Activated CD4-positive, alpha-beta T cell treated with anti-CD3 and anti-CD28 coated beads, Interleukin-2, amount 10 ng/mL, durations not matched to agents 24 days and 14 days (primary cell): ENCODE measurements at regions of chr1 and their contacts with region 1.

Region 1: DNA sequence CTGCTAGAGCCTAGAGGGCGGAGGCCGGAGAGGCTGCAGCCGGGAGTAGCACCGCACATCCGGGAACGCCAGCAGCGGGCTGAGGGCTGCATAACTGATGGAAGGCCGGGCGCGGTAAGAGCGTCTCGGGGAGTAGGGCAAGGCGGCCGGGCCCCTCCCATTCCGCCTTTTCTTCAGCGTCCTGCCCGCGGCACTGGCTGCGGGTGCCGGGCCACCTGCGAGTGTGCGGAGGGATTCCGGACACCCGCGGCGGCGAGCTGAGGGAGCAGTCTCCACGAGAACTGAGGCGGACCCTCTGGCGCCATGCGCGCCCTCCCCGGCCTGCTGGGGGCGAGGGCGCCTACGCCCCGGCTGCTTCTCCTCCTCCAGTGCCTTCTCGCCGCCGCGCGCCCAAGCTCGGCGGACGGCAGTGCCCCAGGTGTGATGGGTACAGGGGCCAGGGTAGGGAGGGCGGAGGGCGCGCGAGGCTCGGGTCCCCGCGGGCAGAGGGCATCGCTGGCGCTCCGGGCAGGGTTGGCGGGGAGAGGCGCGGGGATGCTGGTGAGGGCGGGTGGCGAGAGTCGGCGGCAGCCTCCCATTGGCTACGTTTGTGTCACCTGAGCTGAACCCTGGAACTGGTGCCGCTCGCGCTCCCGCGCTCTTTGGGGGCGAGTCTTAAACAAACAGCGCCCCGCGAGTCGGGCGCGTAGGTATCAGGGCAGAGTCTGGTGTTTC is 334.4 kb downstream of the SRGAP2C start:
- DNase-seq: peak; percentile 95
- H3K4me3 Mint-ChIP-seq: peak overlapping the region; percentile 98
- H3K27ac Mint-ChIP-seq: peak overlapping the region; percentile 95
- H3K4me1 Mint-ChIP-seq: peaks cover 60% of the 10 kb centered on the region
- H3K27me3 Mint-ChIP-seq: no peaks in the 10 kb centered on the region

Region 2: GRCh38 chr1:121458291-121459048 is 60.7 kb before region 1 on chr1:
- intact Hi-C with region 1: loop called (anchors 2 kb)
- DNase-seq: no peak
- H3K4me3 Mint-ChIP-seq: peak overlapping the region; percentile 64
- H3K27ac Mint-ChIP-seq: peak overlapping the region; percentile 59
- H3K4me1 Mint-ChIP-seq: peaks cover 15% of the 10 kb centered on the region
- H3K27me3 Mint-ChIP-seq: peaks cover 7% of the 10 kb centered on the region

Region 3: GRCh38 chr1:121483961-121484424 is 35.2 kb before region 1 on chr1:
- intact Hi-C with region 1: no loop called
- DNase-seq: no peak
- H3K4me3 Mint-ChIP-seq: no peak overlapping the region
- H3K27ac Mint-ChIP-seq: peak overlapping the region; percentile 56
- H3K4me1 Mint-ChIP-seq: peaks cover 26% of the 10 kb centered on the region
- H3K27me3 Mint-ChIP-seq: no peaks in the 10 kb centered on the region

Region 4: DNA sequence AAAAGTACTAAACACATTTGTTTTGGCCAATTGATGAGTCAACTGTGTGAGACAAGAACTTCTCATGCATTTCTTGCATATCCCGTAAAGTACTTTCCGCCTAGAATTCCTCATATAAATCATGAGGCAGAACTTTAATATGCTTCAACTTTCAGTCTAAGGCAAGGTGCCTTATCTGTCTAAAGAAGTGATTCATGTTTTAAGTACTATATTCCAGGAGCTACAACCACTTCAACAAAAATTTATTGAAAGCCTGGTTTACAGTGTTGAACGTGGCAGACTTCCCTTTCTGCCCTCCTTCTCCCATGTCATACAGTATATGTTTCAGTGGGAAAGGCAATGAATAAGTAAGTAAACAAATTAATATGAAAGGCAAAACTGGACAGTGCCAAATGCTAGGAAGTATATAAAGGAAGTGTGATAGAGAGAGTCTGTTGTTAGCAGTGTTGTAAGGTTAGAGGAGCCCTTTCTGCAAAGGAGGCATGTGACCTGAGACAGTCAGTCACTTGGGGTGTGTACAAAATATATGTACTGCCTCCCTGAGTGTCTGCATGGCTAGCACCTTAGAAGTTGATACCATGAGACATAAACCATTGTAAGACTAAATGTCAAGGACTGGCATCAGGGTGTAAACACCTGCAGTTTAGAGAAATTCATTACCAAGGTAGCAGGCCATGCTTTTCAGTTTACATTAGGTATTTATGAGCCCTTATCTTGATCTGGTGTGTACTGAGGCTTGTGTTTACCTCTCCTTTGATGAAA is 27.8 kb after region 1 on chr1:
- intact Hi-C with region 1: no loop called
- DNase-seq: no peak
- H3K4me3 Mint-ChIP-seq: no peak overlapping the region
- H3K27ac Mint-ChIP-seq: no peak overlapping the region
- H3K4me1 Mint-ChIP-seq: peaks cover 22% of the 10 kb centered on the region
- H3K27me3 Mint-ChIP-seq: no peaks in the 10 kb centered on the region

Region 5: DNA sequence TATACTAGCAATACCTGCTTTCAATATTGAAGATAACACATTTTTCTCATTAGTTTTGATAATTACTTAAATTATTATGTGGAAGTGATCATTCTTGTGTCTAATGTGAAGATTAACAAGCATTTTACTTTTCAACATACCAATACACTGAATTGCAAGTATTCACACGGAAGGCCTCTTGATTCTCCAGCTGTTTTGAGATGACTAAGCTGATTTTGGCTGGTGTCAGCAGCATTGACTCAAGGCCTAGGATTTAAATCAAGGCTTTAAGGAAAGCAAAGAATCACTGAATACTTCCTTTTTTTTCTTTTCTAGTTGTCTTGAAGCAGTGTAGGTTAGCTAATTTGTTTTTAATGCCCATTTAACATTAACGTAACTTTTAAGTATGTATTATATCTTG is 39.3 kb after region 1 on chr1:
- intact Hi-C with region 1: no loop called
- DNase-seq: no peak
- H3K4me3 Mint-ChIP-seq: no peak overlapping the region
- H3K27ac Mint-ChIP-seq: no peak overlapping the region
- H3K4me1 Mint-ChIP-seq: peaks cover 4% of the 10 kb centered on the region
- H3K27me3 Mint-ChIP-seq: no peaks in the 10 kb centered on the region